ENCODE measurements at regions of chr12 and their contacts with region 1.

Region 1: DNA sequence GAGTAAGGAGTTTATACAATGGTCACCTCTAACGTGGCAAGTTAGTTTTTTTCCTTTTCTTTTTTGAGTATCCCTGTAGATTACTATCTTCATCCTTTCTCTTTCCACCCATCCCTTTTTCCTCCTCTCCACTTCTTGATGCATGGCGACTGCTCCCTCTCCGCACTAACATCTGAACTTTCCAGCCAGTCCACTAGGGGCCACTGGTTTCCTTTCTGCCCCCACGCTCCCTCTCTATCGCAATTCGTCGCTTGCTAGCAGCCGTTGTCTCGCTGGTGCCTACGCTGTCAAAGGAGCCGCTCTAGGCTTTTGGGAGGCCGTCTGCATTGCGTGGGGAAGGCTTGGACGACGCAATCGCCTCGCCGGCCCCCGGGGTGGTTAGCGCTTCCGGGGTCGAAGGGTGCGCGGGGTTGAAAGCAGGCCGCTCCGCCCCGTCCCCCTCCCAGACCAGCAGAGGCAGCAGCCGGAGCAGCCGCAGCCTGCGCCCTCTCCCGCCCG is at the start of gene PCBP2:
- DNase-seq: peak; percentile 94 to 99 (median 98)
- ATAC-seq: peak; percentile 93
- H3K4me3 ChIP-seq: peak within 1 kb of the TSS; percentile 81 to 88
- H3K4me3 Mint-ChIP-seq: peak within 1 kb of the TSS; percentile 99
- H3K27ac ChIP-seq: peak within 1 kb of the TSS; percentile 80 to 95
- H3K27ac Mint-ChIP-seq: peak within 1 kb of the TSS; percentile 99
- H3K4me1 ChIP-seq: peaks cover 27% of the 10 kb centered on the region
- H3K4me1 Mint-ChIP-seq: peaks cover 43% of the 10 kb centered on the region
- H3K27me3 ChIP-seq: no peaks in the 10 kb centered on the region
- H3K27me3 Mint-ChIP-seq: no peaks in the 10 kb centered on the region
- CTCF ChIP-seq: peak; percentile 94
- total RNA-seq, gene PCBP2: 1,250 to 1,255 TPM

Region 2: DNA sequence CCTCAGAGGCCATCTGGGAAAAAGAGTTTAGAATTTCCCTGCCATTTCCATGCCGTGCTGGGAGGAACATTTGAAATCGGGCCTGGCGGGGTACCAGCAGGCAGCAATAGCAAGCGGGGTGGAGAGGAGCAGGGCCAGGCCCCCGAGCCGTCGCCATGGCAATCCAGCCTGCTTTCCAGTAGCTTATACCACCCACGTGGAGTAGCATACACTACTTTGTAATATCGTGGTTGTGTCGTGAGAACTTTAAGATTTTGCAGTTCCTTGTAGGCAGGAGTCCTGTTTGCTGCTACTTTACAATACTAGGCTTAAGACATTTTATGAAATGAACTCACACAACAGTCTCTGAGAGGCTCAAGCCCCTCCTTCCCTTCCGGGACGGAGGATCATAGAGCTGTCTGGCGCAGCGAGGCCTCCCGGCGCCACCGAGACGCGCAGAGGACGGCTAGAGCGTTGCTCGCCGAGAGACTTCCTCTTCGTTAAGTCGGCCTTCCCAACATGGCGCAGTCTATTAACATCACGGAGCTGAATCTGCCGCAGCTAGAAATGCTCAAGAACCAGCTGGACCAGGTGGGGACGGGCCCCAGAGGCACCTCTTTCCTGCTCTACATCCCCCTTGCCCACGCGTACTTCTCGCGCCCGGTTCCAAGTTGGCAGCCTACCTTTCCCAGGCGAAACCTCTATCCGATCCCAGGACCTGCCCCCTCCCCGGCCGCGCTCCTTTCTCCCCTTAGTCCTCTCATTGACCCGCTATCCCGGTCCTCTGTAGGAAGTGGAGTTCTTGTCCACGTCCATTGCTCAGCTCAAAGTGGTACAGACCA is 156.4 kb before region 1 on chr12 and contains the start of gene PFDN5:
- CTCF ChIA-PET with region 1: no interaction called
- POLR2A ChIA-PET with region 1: no interaction called
- intact Hi-C with region 1: loop called in 1 of 2 experiments (anchors 1 kb)
- DNase-seq: peak; percentile 72 to 95 (median 87)
- ATAC-seq: peak; percentile 92
- H3K4me3 ChIP-seq: peak within 1 kb of the TSS; percentile 75 to 88
- H3K4me3 Mint-ChIP-seq: peak within 1 kb of the TSS; percentile 99
- H3K27ac ChIP-seq: peak within 1 kb of the TSS; percentile 80 to 82
- H3K27ac Mint-ChIP-seq: peak within 1 kb of the TSS; percentile 99
- H3K4me1 ChIP-seq: peaks cover 28% of the 10 kb centered on the region
- H3K4me1 Mint-ChIP-seq: peaks cover 51% of the 10 kb centered on the region
- H3K27me3 ChIP-seq: no peaks in the 10 kb centered on the region
- H3K27me3 Mint-ChIP-seq: no peaks in the 10 kb centered on the region
- CTCF ChIP-seq: no peak
- total RNA-seq, gene PFDN5: 741 to 751 TPM

Region 3: DNA sequence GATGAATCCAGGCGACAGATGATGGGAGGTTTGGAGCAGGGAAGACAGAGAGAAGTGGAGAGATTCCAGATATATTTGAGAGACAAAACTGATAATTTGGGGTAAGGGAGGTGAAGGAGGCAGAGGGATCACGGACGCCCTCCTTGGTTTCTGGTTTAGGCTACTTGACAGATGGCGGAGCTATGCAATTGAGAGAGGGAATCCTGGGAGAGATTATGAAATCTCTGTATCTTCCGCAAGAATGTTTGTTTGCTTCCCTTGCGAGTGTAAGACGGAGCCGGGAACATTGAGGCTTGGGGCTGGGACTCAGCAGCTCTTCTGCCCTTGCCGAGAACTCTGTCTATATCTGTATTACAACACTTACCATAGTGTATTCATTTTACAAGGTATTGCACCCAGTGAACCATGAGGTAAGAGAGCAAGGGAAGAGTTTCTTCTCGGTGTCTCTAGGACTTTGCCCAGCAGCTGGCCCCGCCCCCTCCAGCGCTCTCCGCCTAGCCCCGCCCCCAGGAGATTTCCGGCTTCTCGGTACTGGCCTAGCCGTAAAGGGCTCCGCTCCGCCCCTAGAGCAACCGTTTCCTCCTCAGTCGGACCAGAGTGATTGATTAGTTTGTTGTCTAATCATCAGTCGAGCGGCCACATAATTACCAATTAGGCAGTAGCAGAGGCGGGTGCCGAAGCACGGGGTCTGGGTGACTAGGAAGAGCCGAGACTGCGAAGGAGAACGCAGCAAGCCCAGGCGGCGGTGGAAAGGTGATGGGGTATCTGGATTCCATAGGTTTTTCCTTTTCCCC is 10.5 kb before region 1 on chr12 and contains the start of gene PRR13:
- CTCF ChIA-PET with region 1: interaction called, 3 read pairs
- POLR2A ChIA-PET with region 1: interaction called, 6 read pairs
- intact Hi-C with region 1: loop called (anchors 1 kb)
- DNase-seq: peak; percentile 95 to 99 (median 99)
- ATAC-seq: peak; percentile 95
- H3K4me3 ChIP-seq: peak within 1 kb of the TSS; percentile 86 to 98
- H3K4me3 Mint-ChIP-seq: peak within 1 kb of the TSS; percentile 97
- H3K27ac ChIP-seq: peak within 1 kb of the TSS; percentile 85 to 94
- H3K27ac Mint-ChIP-seq: peak within 1 kb of the TSS; percentile 97
- H3K4me1 ChIP-seq: peaks cover 36% of the 10 kb centered on the region
- H3K4me1 Mint-ChIP-seq: peaks cover 46% of the 10 kb centered on the region
- H3K27me3 ChIP-seq: no peaks in the 10 kb centered on the region
- H3K27me3 Mint-ChIP-seq: no peaks in the 10 kb centered on the region
- CTCF ChIP-seq: no peak
- total RNA-seq, gene PRR13: 131 to 155 TPM

Region 4: DNA sequence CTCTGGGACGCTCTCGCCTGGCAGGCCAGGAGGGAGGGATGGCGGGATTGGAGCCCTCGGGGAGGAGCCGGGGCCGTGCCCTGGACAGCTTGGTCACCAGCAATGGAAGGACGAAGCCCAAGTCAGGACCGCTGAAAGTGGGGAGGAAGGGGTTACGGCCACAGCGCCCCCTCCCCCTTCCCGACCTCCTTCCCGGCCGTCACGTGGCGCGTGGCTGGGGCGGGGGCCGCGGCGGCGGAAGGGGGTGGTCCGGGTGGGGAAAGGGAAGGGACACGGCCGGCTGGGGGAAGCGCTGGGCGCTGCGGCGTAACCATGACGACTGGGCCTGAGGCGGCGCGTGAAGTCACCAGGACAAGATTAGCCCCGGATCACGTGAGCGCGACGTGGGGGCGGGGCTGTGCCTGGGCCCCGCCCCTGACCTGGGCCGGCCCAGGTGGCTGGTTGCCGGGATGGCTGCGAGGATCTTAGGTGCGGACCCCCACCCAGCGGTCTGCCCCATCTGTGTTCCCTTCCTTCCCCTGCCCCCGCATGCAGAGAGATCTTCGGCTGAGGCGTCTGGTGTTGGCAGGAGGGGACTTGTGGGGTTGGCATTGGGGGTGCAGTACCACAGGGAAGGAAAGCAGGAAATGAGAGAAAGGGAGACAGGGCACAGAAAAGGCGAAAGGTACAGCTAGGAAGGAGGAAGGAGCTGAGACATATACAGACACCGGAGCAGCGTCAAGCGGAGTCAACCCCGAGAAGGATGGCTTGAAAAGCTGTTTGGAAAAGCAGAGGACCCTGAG is 41.3 kb after region 1 on chr12:
- CTCF ChIA-PET with region 1: interaction called, 4 read pairs
- POLR2A ChIA-PET with region 1: interaction called, 6 read pairs
- intact Hi-C with region 1: loop called in 1 of 2 experiments (anchors 1 kb)
- DNase-seq: peak; percentile 66 to 93 (median 85)
- ATAC-seq: peak; percentile 93
- H3K4me3 ChIP-seq: peak overlapping the region; percentile 61 to 66
- H3K4me3 Mint-ChIP-seq: peak overlapping the region; percentile 89
- H3K27ac ChIP-seq: peak overlapping the region; percentile 67 to 85
- H3K27ac Mint-ChIP-seq: peak overlapping the region; percentile 91
- H3K4me1 ChIP-seq: peaks cover 20% of the 10 kb centered on the region
- H3K4me1 Mint-ChIP-seq: peaks cover 38% of the 10 kb centered on the region
- H3K27me3 ChIP-seq: no peaks in the 10 kb centered on the region
- H3K27me3 Mint-ChIP-seq: no peaks in the 10 kb centered on the region
- CTCF ChIP-seq: no peak

Region 5: GRCh38 chr12:53561590-53561953 is 109.9 kb after region 1 on chr12:
- CTCF ChIA-PET with region 1: no interaction called
- POLR2A ChIA-PET with region 1: no interaction called
- intact Hi-C with region 1: no loop called
- DNase-seq: no peak
- ATAC-seq: no peak
- H3K4me3 ChIP-seq: no peak overlapping the region
- H3K4me3 Mint-ChIP-seq: no peak overlapping the region
- H3K27ac ChIP-seq: no peak overlapping the region
- H3K27ac Mint-ChIP-seq: no peak overlapping the region
- H3K4me1 ChIP-seq: peaks cover 18% of the 10 kb centered on the region
- H3K4me1 Mint-ChIP-seq: peaks cover 42% of the 10 kb centered on the region
- H3K27me3 ChIP-seq: no peaks in the 10 kb centered on the region
- H3K27me3 Mint-ChIP-seq: no peaks in the 10 kb centered on the region
- CTCF ChIP-seq: no peak

Region 6: GRCh38 chr12:53625946-53626701 is 174.4 kb after region 1 on chr12 and contains the start of gene ATF7:
- CTCF ChIA-PET with region 1: no interaction called
- POLR2A ChIA-PET with region 1: no interaction called
- intact Hi-C with region 1: loop called in 1 of 2 experiments (anchors 5 kb)
- DNase-seq: peak; percentile 96 to 100 (median 98)
- ATAC-seq: peak; percentile 92
- H3K4me3 ChIP-seq: peak within 1 kb of the TSS; percentile 65 to 90
- H3K4me3 Mint-ChIP-seq: peak within 1 kb of the TSS; percentile 93
- H3K27ac ChIP-seq: peak within 1 kb of the TSS; percentile 84 to 85
- H3K27ac Mint-ChIP-seq: peak within 1 kb of the TSS; percentile 98
- H3K4me1 ChIP-seq: peaks cover 30% of the 10 kb centered on the region
- H3K4me1 Mint-ChIP-seq: peaks cover 46% of the 10 kb centered on the region
- H3K27me3 ChIP-seq: no peaks in the 10 kb centered on the region
- H3K27me3 Mint-ChIP-seq: no peaks in the 10 kb centered on the region
- CTCF ChIP-seq: no peak
- total RNA-seq, gene ATF7: 9.1 to 13.2 TPM

Measured in CD8-positive, alpha-beta T cell (primary cell).